Right ventricle myocardium inferior (tissue), 1 donor: ENCODE measurements at regions of chr11 and their contacts with region 1.

Region 1: DNA sequence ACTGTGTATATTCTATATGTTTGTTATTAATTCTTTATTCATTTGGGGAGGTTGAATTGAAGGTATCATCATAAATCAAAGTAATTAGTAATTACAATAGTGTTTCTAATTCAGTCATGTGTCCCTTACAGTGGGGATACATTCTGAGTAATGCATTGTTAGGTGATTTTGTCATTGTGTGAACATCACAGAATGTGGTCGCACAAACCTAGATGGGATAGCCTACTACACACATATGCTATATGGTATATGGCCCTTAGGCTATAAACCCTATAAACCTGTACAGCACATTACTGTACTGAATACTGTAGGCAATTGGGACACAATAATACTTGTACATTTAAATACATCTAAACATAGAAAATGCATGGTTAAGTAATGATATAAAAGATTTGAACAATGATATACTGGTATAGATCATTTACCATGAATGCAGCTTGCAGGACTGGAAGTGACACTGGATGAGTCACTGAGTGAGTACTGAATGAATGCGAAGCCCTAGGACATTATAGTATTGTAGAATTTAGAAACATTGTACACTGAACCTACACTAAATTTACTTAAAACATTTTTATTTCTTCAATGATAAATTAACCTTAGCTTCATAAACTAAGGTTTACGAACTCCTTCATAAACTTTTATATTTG is 936.2 kb upstream of the CHORDC1 start:
- DNase-seq: no peak
- ATAC-seq: no peak

Region 2: DNA sequence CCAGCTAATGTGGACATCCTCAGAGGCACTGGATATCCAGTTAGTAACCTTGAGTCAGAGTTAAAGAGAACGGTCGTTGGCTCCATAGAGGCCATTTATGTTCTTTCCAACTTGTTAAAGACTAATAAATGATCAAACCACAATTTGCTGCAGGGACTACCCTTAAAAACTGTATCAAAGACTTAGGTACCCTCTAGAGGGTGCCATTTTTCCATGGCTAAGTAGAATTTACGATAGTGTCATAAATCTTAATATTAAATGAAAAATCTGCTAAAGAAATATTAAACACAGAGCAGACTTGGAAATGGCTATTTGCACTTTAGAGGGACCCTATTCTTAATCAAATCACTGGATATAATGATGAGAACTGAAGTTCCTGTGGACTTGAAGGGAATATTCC is 250.9 kb before region 1 on chr11:
- intact Hi-C with region 1: no loop called
- DNase-seq: no peak
- ATAC-seq: no peak

Region 3: GRCh38 chr11:91219535-91219934 is 60.5 kb after region 1 on chr11:
- intact Hi-C with region 1: loop called (anchors 5 kb)
- DNase-seq: no peak
- ATAC-seq: peak; percentile 44

Region 4: GRCh38 chr11:91396236-91397133 is 237.5 kb after region 1 on chr11:
- intact Hi-C with region 1: loop called (anchors 10 kb)
- DNase-seq: no peak
- ATAC-seq: no peak